ENCODE measurements at regions of chr1 and their contacts with region 1.

Region 1: GRCh38 chr1:119613769-119614720 is 34.0 kb downstream of the ZNF697 start:
- DNase-seq: peak; percentile 74 to 86
- ATAC-seq: peak; percentile 85

Region 2: GRCh38 chr1:119467857-119468668 is 146.0 kb before region 1 on chr1:
- intact Hi-C with region 1: no loop called
- DNase-seq: no peak
- ATAC-seq: peak; percentile 74

Region 3: GRCh38 chr1:119662034-119662437 is 48.0 kb after region 1 on chr1:
- intact Hi-C with region 1: loop called (anchors 5 kb)
- DNase-seq: peak in 1 of 2 donors; percentile 36
- ATAC-seq: peak; percentile 90

Region 4: GRCh38 chr1:119667173-119667572 is 53.1 kb after region 1 on chr1:
- intact Hi-C with region 1: loop called (anchors 5 kb)
- DNase-seq: no peak
- ATAC-seq: no peak

Region 5: GRCh38 chr1:119675349-119676345 is 61.6 kb after region 1 on chr1:
- intact Hi-C with region 1: loop called in 1 of 2 experiments (anchors 2 kb)
- DNase-seq: peak; percentile 71 to 90
- ATAC-seq: peak; percentile 74